Mammary epithelial cell (primary cell): ENCODE measurements at regions of chr6 and their contacts with region 1.

Region 1: GRCh38 chr6:163457637-163458561 is 43.4 kb downstream of the QKI start:
- DNase-seq: peak; percentile 79
- H3K4me3 ChIP-seq: no peak overlapping the region
- H3K27ac ChIP-seq: peak overlapping the region; percentile 18
- H3K4me1 ChIP-seq: peaks cover 31% of the 10 kb centered on the region
- H3K27me3 ChIP-seq: no peaks in the 10 kb centered on the region
- CTCF ChIP-seq: no peak

Region 2: GRCh38 chr6:163533443-163533842 is 75.5 kb after region 1 on chr6:
- CTCF ChIA-PET with region 1: no interaction called
- dilution Hi-C with region 1: no loop called
- in situ Hi-C with region 1: no loop called
- intact Hi-C with region 1: loop called (anchors 5 kb)
- DNase-seq: peak; percentile 72
- H3K4me3 ChIP-seq: no peak overlapping the region
- H3K27ac ChIP-seq: no peak overlapping the region
- H3K4me1 ChIP-seq: peaks cover 42% of the 10 kb centered on the region
- H3K27me3 ChIP-seq: no peaks in the 10 kb centered on the region
- CTCF ChIP-seq: no peak